Head of caudate nucleus (tissue), 42 donors: ENCODE measurements at regions of chr9 and their contacts with region 1.

Region 1: DNA sequence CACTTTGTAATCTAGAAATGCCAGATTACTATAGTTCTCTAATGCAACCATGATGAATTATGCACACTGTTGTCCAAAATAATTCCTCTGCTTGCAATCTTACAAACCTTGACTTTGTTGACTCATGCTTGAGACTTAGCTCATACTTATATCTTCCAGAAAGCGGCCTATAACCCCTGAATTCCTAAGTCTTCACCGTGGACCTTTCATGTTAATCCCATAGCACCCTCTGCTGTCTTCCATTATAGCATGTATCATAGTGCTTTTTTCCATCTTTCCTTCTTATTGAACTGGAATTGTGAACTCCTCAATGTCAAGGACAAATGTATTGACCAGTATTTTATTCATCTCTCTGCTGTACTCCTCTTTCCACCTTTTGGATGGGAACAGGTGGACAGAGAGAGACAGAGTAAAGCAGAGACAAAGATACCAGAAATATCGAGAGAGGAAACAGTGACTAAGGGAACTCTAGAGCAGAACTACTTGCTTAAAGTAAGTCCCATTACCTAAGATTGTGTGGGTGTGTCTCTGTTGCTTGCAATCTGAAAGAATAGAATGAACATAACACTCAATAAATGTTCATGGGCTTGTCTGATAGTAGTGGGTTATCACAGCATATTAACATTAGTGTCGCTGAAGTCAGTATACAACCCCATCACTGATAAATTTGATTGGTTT is 110.1 kb downstream of the LURAP1L start:
- DNase-seq: peak in 3 of 42 donors; percentile 4 to 6 (median 6)

Region 2: DNA sequence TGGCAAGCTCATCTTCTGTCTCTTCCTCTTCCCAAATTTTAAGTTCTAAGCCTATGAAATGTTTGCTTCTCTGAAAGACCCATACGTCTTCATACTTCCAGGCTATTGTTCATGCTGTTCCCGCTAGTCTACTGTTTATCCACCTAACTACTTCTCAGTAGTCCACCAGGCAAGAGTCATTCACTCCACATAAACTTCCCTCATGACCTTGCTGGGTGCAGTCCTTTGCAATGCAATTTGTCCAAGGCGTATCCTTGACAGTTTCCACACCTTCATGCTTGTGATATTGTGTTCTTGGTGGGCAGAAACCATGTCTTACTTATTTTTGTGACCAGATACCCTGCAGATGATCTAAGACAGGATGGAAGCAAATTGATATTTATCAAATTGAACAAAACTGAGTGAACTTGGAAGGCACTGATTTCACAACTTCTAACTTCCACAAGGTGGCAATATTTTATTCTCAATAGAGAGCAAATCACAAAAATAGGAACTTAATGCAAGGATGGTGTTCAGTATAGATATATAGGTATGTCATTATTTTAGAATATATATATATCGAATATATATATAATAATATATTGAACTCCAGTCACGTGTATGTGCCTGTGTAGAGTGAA is 161.4 kb before region 1 on chr9:
- intact Hi-C with region 1: loop called (anchors 5 kb)
- DNase-seq: no peak